ENCODE measurements at regions of chr15 and their contacts with region 1.

Region 1: DNA sequence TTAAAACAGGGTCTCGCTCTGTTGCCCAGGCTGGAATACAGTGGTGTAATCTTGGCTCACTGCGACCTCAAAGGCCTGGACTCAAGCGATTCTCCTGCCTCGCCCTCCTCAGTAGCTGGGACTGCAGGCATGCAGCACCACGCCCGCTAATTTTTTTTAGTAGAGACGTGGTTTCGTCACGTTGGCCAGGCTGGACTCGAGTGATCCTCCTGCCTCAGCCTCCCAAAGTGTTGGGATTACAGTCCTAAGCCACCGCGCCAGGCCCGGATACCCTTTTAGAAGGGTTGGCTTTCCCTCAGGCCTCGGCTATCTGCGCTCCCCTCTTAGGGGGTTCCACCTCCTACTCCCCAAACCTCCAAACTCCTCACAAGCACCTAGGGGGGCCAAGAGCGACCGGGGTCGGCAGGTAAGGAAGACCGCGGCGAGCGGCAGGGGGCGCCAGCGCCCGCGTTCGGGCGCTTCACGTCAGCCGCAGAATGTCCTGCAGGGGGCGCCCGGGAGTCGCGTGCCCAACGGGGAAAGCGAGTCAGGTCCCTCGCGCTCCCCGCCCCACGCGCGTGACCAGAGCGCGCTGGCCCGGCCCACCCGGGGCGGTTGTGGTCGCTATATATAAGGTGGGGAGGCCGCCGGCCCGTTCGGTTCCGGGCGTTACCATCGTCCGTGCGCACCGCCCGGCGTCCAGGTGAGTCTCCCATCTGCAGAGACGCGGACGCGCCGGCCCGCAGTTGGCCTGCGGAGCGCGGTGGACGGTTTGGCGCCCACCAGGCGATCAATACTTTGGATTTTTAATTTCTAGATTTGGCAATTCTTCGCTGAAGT is 51.8 kb upstream of the GATM start:
- DNase-seq: peak; percentile 39
- ATAC-seq: peak; percentile 91
- H3K4me3 ChIP-seq: peak overlapping the region; percentile 52 to 75
- H3K27ac ChIP-seq: peak overlapping the region; percentile 83
- H3K4me1 ChIP-seq: peaks cover 13% of the 10 kb centered on the region
- H3K27me3 ChIP-seq: no peaks in the 10 kb centered on the region
- CTCF ChIP-seq: peak; percentile 100

Region 2: GRCh38 chr15:44971036-44971435 is 459.1 kb before region 1 on chr15:
- CTCF ChIA-PET with region 1: no interaction called
- POLR2A ChIA-PET with region 1: no interaction called
- in situ Hi-C with region 1: no loop called
- intact Hi-C with region 1: no loop called
- DNase-seq: no peak
- ATAC-seq: no peak
- H3K4me3 ChIP-seq: no peak overlapping the region
- H3K27ac ChIP-seq: no peak overlapping the region
- H3K4me1 ChIP-seq: no peaks in the 10 kb centered on the region
- H3K27me3 ChIP-seq: peaks cover 3% of the 10 kb centered on the region; the same call in 1 of the 2 replicates
- CTCF ChIP-seq: no peak

Region 3: DNA sequence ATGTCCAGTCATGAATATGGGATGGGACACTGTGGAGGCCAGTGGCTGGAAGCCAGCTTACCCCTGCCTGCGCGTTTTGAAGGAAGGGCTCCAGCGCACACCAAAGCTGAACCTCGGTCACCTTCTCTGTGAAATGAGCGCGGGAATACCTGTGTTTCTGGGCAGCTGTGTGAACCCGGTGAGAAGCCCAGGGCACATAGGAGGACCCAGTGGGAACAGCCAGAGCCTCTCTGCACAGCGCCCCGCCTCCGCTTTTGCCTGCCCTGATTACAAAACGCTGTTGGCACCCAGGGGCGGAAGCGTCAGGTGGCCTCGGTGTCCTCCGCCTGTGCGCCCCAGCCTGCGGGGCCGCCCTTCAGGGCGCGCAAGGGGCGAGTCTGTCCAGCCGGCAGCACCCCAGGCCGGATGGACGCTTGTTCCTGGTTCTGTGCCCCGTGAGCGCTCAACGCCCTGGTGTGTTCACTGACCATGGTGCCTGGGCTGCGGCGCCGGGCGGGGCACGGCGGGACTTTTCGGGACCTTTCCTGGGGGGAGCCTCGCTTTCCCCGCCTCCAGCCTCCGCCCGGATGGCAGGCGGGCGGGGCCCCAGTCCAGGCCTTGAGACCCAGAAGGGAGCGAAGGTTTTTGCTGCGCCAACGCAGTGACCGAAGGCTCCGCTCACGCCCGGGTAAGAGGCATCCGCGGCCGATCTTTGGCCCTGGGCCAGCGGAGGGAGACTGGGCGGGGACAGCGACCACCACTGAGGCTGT is 204.4 kb after region 1 on chr15 and contains the start of gene SQOR:
- CTCF ChIA-PET with region 1: no interaction called
- POLR2A ChIA-PET with region 1: interaction called, 12 read pairs
- in situ Hi-C with region 1: no loop called
- intact Hi-C with region 1: no loop called
- DNase-seq: no peak
- ATAC-seq: peak; percentile 94
- H3K4me3 ChIP-seq: peak within 1 kb of the TSS; percentile 85 to 89
- H3K27ac ChIP-seq: peak within 1 kb of the TSS; percentile 88
- H3K4me1 ChIP-seq: peaks cover 26% of the 10 kb centered on the region
- H3K27me3 ChIP-seq: no peaks in the 10 kb centered on the region
- CTCF ChIP-seq: no peak
- total RNA-seq, gene SQOR: 62.2 TPM

Region 4: GRCh38 chr15:45773149-45773548 is 343.0 kb after region 1 on chr15:
- CTCF ChIA-PET with region 1: no interaction called
- POLR2A ChIA-PET with region 1: no interaction called
- in situ Hi-C with region 1: no loop called
- intact Hi-C with region 1: no loop called
- DNase-seq: no peak
- ATAC-seq: no peak
- H3K4me3 ChIP-seq: no peak overlapping the region
- H3K27ac ChIP-seq: no peak overlapping the region
- H3K4me1 ChIP-seq: no peaks in the 10 kb centered on the region
- H3K27me3 ChIP-seq: no peaks in the 10 kb centered on the region
- CTCF ChIP-seq: no peak

Measured in Panc1 (cell line).